Posterior vena cava (tissue), 2 donors: ENCODE measurements at regions of chr20 and their contacts with region 1.

Region 1: DNA sequence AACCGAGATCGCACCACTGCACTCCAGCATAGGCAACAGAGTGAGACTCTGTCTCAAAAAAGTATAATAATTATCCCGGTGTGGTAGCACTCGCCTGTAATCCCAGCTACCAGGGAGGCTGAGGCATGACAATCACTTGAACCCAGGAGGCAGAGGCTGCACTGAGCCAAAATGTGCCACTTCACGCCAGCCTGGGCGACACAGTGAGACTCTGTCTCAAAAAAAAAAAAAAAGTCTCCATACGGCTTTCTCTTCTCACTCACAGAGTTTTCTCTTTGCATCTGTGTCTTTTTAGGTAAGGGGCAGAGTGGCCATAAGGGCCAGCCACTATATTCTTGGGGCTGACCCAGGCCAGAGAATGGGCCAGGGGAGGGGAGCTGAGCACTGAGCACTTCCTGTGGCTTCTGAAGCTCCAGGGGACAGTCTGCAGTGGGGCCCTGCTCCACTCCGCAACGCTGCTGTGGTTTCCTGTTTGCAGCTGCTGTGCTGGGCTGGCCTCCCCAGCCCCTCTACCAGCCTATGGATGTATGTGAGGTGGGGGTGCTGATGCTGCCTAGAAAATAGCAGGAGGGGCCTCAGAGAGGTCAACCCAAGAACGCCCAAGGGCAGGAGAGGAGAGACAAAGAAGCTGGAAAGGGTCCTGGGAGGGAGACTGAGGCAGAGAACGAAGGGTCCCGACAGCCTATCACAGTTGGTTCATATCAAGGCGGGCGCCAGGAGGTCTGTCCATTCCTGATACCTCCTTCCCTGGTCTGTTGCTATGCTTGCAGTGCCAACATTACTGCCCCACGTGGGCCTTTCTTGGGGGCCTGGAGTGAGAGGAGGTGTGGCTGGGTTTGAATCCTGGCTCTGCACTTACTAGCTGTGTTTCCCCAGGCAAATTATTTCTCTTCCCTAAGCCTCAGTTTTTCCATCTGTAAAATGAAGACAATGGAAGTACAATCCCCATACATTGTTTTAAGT is 16.0 kb downstream of the SLA2 start:
- DNase-seq: peak; percentile 82

Region 2: GRCh38 chr20:36670665-36671357 is 40.8 kb after region 1 on chr20:
- intact Hi-C with region 1: loop called in 1 of 2 experiments (anchors 1 kb)
- DNase-seq: no peak

Region 3: DNA sequence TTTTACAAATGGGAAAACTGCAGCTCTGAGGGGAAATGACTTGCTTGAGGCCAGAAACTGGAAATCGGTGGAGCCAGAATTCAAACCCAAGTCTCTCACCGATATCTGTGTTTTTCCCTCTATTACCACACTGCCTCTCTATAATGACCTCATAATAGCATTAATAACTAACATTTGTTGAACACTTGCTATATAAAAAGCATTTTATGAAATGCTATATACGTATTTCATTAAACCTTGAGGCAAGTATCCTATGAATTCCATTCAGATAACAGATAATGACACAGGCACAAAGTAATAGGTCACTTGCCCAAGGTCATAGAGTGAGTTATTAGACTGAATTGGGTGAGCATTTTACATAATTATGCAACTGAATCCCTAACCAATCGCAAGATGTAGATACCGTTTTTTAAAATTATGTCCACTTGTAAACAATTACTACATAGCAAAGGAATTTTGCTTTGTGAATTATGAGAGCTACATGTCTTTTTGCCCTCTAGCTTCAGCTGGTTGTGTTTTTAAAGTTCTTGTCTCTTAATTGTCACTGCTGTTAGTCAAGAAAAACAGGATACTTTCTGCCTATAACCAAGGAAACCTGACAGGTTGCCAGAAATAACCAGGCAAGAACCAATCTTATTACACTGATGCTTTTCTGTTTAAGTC is 138.9 kb after region 1 on chr20:
- intact Hi-C with region 1: no loop called
- DNase-seq: no peak

Region 4: DNA sequence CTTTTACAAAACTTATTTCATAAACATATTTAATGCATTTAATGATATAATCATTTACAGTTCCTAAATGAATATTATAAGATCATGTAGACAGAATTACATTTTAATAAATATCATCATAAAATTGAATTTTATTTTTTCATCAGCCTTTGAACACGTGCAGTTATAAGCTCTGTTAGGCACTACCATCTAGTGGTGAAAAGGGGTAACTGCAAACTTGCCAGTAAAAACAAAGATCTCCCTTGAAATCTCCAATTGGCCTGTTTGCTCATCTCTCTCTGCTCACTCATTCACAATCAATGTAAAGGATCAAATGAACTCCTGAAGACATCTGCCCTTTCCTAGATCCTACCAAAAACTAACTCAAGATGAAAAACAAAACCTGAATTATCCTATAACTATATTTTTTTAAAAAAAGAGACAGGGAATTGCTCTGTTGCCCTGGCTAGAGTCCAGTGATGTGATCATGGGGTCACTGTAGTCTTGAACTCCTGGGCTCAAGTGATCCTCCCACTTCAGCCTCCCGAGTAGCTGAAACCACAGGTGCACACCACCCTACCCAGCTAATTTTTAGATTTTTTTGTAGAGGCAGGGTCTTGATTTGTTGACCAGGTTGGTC is 289.8 kb after region 1 on chr20:
- intact Hi-C with region 1: no loop called
- DNase-seq: no peak